ENCODE measurements at regions of chr2 and their contacts with region 1.

Region 1: DNA sequence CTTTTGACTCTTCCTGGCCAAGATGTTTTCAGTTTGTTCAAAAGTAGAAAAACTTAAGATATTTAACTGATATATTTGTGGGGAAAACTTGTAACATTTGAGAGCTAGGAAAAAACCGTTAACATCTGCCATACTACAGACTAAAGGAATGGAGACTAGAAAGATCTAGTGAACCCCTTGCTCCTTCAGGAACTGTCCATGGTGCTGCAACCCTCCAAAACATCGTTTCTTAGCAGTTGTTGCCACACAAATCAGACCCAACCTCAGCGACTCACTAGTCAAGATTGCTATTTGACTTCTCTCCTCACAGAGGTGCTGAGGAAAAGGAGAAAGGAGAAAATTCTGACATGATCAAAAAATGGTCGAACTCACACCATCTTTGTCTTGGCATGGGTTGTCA is 393.8 kb upstream of the LYPD1 start:
- DNase-seq: no peak
- ATAC-seq: no peak
- H3K4me3 ChIP-seq: no peak overlapping the region
- H3K4me3 Mint-ChIP-seq: no peak overlapping the region
- H3K27ac ChIP-seq: no peak overlapping the region
- H3K27ac Mint-ChIP-seq: no peak overlapping the region
- H3K4me1 ChIP-seq: no peaks in the 10 kb centered on the region
- H3K4me1 Mint-ChIP-seq: no peaks in the 10 kb centered on the region
- H3K27me3 ChIP-seq: no peaks in the 10 kb centered on the region
- H3K27me3 Mint-ChIP-seq: no peaks in the 10 kb centered on the region
- CTCF ChIP-seq: no peak

Region 2: GRCh38 chr2:133862400-133862977 is 798.7 kb after region 1 on chr2:
- intact Hi-C with region 1: loop called (anchors 10 kb)
- DNase-seq: no peak
- ATAC-seq: no peak
- H3K4me3 ChIP-seq: no peak overlapping the region
- H3K4me3 Mint-ChIP-seq: no peak overlapping the region
- H3K27ac ChIP-seq: no peak overlapping the region
- H3K27ac Mint-ChIP-seq: no peak overlapping the region
- H3K4me1 ChIP-seq: no peaks in the 10 kb centered on the region
- H3K4me1 Mint-ChIP-seq: no peaks in the 10 kb centered on the region
- H3K27me3 ChIP-seq: no peaks in the 10 kb centered on the region
- H3K27me3 Mint-ChIP-seq: no peaks in the 10 kb centered on the region
- CTCF ChIP-seq: no peak

Measured in natural killer cell (primary cell).